Activated CD4-positive, alpha-beta memory T cell treated with anti-CD3 and anti-CD28 coated beads for 36 hours (primary cell): ENCODE measurements at regions of chr16 and their contacts with region 1.

Region 1: GRCh38 chr16:28218104-28218503 is 6.3 kb upstream of the XPO6 start:
- DNase-seq: peak; percentile 75
- H3K4me3 Mint-ChIP-seq: no peak overlapping the region
- H3K27ac Mint-ChIP-seq: no peak overlapping the region
- H3K4me1 Mint-ChIP-seq: no peaks in the 10 kb centered on the region
- H3K27me3 Mint-ChIP-seq: no peaks in the 10 kb centered on the region

Region 2: GRCh38 chr16:27972500-27972899 is 245.6 kb before region 1 on chr16:
- CTCF ChIA-PET with region 1: interaction called, 65 read pairs
- POLR2A ChIA-PET with region 1: no interaction called
- intact Hi-C with region 1: no loop called
- DNase-seq: peak; percentile 58
- H3K4me3 Mint-ChIP-seq: no peak overlapping the region
- H3K27ac Mint-ChIP-seq: no peak overlapping the region
- H3K4me1 Mint-ChIP-seq: peaks cover 4% of the 10 kb centered on the region
- H3K27me3 Mint-ChIP-seq: peaks cover 5% of the 10 kb centered on the region

Region 3: DNA sequence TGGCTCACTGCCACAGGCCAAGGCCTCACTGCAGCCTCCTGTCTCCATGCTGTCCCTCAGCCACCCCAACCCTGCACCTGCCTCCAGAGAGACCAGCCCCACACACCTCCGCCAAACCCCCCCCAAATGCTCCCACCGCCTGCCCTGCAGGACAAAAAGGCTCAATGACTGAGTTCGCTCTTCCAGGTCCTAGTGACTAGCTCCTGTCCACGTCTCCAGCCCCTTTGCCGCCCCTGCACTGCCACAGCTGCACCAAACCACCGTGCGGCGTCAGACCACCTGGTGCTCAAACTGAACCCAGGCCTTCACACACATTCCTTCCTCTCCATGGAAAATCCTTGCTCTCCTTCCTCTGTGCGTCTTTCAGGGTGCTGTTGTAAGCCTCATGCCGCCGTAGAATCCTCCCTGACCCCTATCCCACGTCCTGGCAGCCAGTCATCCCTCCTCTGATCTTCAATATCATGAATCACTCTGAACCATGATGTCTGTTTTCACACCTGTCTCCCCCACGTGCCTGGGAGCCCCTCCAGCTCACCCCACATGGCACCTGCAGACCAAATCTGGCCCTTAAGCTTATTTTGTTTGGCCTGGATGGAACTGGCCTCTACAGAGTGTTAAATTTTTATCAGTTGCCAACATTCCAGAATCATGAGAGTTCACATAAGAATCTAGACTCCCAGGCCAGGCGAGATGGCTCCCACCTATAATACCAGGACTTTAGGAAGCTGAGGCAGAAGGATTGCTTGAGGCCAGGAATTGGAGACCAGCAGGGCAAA is 150.3 kb before region 1 on chr16:
- CTCF ChIA-PET with region 1: interaction called, 21 read pairs
- POLR2A ChIA-PET with region 1: no interaction called
- intact Hi-C with region 1: loop called (anchors 5 kb)
- DNase-seq: no peak
- H3K4me3 Mint-ChIP-seq: no peak overlapping the region
- H3K27ac Mint-ChIP-seq: no peak overlapping the region
- H3K4me1 Mint-ChIP-seq: peaks cover 2% of the 10 kb centered on the region
- H3K27me3 Mint-ChIP-seq: peaks cover 10% of the 10 kb centered on the region

Region 4: DNA sequence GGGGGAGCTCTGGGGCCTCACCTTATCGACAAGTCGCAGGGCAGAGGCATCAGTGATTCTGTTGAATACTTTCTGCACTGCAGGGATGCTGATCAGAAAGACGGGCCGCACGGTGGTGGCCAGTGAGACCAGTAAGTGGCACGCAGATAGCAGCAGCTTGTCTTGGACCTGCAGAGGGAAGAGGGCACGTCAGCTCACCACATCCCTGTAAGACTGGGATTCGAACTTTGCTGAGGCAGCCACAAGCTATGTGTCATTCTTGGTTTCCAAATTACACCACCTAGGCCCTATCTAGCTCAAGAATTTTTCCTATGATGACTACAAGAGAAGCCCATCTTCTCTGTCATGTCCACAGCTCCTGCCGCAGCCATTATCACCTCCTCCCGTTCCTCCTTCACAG is 105.2 kb before region 1 on chr16:
- CTCF ChIA-PET with region 1: interaction called, 11 read pairs
- POLR2A ChIA-PET with region 1: interaction called, 3 read pairs
- intact Hi-C with region 1: no loop called
- DNase-seq: peak; percentile 67
- H3K4me3 Mint-ChIP-seq: no peak overlapping the region
- H3K27ac Mint-ChIP-seq: peak overlapping the region; percentile 59
- H3K4me1 Mint-ChIP-seq: peaks cover 18% of the 10 kb centered on the region
- H3K27me3 Mint-ChIP-seq: no peaks in the 10 kb centered on the region

Region 5: GRCh38 chr16:28149011-28149888 is 68.9 kb before region 1 on chr16:
- CTCF ChIA-PET with region 1: interaction called, 14 read pairs
- POLR2A ChIA-PET with region 1: no interaction called
- intact Hi-C with region 1: no loop called
- DNase-seq: no peak
- H3K4me3 Mint-ChIP-seq: no peak overlapping the region
- H3K27ac Mint-ChIP-seq: peak overlapping the region; percentile 80
- H3K4me1 Mint-ChIP-seq: peaks cover 59% of the 10 kb centered on the region
- H3K27me3 Mint-ChIP-seq: no peaks in the 10 kb centered on the region

Region 6: DNA sequence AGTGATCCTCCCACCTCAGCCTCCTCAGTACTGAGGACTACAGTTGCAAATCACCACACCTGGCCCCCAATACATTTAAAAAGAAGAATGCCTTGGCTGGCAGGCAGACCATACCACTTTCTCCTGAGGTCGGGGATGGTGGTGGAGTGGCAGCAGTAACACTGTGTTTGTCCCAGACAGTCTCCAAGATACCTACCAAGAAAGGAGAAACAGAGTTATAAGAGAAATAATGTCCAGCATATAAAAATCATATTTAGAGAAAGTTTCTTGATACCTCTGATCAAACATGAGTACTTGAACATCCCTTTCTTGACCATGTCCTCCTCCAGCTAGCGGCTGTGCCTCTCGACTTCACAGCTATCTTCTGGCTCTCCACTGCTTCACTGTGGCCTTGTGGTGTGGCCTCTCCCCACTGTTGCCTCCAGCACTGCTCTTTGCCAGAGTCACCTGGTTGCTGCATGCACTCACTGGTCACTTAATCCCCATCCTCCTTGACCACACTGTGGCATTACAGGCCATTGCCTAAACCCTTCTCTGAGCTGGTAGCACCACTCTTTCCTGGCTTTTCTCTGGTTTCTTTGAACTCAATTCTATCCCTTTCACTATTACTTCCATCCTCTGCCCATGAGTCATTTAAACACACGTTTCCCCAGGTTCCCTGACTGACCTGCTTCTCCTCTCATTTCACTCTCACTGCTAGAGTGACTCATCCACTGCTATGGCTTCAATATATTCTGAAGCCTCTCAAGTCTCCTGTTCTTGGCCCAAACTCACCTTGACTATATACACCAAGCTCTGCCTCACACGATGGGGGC is 51.5 kb before region 1 on chr16:
- CTCF ChIA-PET with region 1: interaction called, 12 read pairs
- POLR2A ChIA-PET with region 1: no interaction called
- intact Hi-C with region 1: no loop called
- DNase-seq: peak; percentile 48
- H3K4me3 Mint-ChIP-seq: no peak overlapping the region
- H3K27ac Mint-ChIP-seq: peak overlapping the region; percentile 82
- H3K4me1 Mint-ChIP-seq: peaks cover 76% of the 10 kb centered on the region
- H3K27me3 Mint-ChIP-seq: no peaks in the 10 kb centered on the region

Region 7: DNA sequence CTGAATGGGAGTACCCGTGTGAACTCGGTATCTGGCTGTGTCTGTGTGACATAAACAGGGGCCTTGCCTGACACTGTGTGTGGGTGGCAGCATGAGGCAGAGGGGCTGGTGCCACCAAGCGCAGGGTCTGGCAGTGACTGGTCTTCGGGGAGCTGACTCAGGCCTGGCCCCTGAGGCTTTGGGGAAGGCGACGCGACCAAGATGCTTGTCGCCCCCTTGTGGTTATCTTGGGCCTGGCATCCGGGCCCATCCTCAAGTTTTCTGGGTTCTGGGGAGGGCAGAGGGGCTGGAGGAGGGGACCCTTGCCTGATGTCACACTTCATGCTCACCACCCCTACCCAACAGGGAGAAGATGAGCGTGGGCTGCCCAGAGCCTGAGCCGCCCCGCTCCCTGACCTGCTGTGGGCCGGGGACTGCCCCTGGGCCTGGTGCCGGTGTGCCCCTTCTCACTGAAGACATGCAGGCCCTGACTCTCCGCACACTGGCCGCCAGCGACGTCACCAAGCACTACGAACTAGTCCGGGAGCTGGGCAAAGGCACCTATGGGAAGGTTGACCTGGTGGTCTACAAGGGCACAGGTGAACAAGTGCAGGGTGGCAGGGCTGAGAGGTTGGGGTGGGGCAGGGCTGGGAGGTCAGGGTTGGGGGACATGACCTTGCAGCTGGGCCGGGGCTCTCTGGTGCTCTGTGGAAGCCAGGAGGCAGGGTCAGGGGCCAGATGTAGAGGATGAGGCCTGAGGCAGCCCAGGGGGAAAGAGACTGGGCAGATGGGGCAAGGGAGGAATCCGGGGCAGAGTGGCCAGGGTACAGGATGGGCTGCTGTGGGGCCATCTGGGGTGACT is 99.2 kb after region 1 on chr16:
- CTCF ChIA-PET with region 1: interaction called, 3 read pairs
- POLR2A ChIA-PET with region 1: no interaction called
- intact Hi-C with region 1: loop called (anchors 10 kb)
- DNase-seq: peak; percentile 82
- H3K4me3 Mint-ChIP-seq: no peak overlapping the region
- H3K27ac Mint-ChIP-seq: peak overlapping the region; percentile 38
- H3K4me1 Mint-ChIP-seq: peaks cover 19% of the 10 kb centered on the region
- H3K27me3 Mint-ChIP-seq: no peaks in the 10 kb centered on the region